ENCODE measurements at regions of chr2 and their contacts with region 1.

Region 1: DNA sequence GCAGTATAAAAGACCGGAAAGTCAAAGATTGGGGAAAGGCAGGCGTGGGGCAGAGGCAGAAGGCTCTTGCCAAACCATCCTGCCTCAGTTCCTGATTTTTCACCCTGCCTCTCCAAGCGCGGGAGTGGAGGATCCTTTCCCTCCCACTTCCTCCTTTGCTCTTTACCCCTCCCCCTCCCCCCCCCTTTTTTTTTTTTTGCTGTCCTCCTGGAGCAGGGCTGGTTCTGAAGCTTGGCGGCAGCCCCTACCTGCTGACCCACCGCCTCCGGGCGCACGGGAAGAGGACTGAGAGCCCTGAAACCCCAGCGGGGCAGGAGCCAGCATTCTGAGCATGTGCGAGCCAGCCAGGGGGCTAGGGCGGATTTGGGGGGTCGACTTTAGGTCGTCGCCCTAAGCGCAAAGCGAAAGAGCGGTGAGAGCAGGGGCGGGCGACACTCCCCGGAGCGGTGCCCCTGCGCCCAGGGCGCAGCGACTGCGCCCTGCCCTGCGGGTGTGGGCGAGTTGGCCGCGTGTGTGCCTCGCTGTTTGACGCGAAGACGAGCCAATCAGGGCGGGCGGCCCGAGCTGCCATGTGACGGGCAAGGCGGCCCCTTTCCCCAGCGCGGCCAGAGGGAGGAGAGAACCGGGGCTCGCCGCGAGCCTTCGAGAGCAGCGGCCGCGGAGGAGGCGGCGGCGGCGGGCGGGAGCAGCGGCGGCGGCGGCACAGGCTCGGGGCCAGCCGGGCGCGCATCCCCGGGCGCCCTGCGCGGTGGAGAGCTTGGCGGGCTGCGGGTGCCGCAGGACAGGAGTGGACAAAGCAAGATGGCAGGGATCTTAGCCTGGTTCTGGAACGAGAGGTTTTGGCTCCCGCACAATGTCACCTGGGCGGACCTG is at the start of gene CERS6:
- DNase-seq: peak; percentile 96
- H3K4me3 ChIP-seq: peak within 1 kb of the TSS; percentile 90
- H3K4me3 Mint-ChIP-seq: no peak within 1 kb of the TSS
- H3K27ac Mint-ChIP-seq: no peak within 1 kb of the TSS
- H3K4me1 ChIP-seq: no peaks in the 10 kb centered on the region
- H3K4me1 Mint-ChIP-seq: peaks cover 11% of the 10 kb centered on the region
- H3K27me3 ChIP-seq: no peaks in the 10 kb centered on the region
- H3K27me3 Mint-ChIP-seq: no peaks in the 10 kb centered on the region
- CTCF ChIP-seq: no peak
- total RNA-seq, gene CERS6: 32.7 and 35.5 TPM in 2 replicates

Region 2: GRCh38 chr2:167196461-167197252 is 1259.2 kb before region 1 on chr2:
- CTCF ChIA-PET with region 1: no interaction called
- POLR2A ChIA-PET with region 1: no interaction called
- intact Hi-C with region 1: no loop called
- DNase-seq: no peak
- H3K4me3 ChIP-seq: no peak overlapping the region
- H3K4me3 Mint-ChIP-seq: no peak overlapping the region
- H3K27ac Mint-ChIP-seq: no peak overlapping the region
- H3K4me1 ChIP-seq: peaks cover 10% of the 10 kb centered on the region; the same call in 1 of the 2 replicates
- H3K4me1 Mint-ChIP-seq: peaks cover 6% of the 10 kb centered on the region
- H3K27me3 ChIP-seq: no peaks in the 10 kb centered on the region
- H3K27me3 Mint-ChIP-seq: no peaks in the 10 kb centered on the region
- CTCF ChIP-seq: no peak

Region 3: GRCh38 chr2:168404764-168405163 is 51.1 kb before region 1 on chr2:
- CTCF ChIA-PET with region 1: no interaction called
- POLR2A ChIA-PET with region 1: no interaction called
- intact Hi-C with region 1: loop called (anchors 2 kb)
- DNase-seq: no peak
- H3K4me3 ChIP-seq: no peak overlapping the region
- H3K4me3 Mint-ChIP-seq: peak overlapping the region; percentile 29
- H3K27ac Mint-ChIP-seq: no peak overlapping the region
- H3K4me1 ChIP-seq: peaks cover 12% of the 10 kb centered on the region
- H3K4me1 Mint-ChIP-seq: peaks cover 28% of the 10 kb centered on the region
- H3K27me3 ChIP-seq: no peaks in the 10 kb centered on the region
- H3K27me3 Mint-ChIP-seq: no peaks in the 10 kb centered on the region
- CTCF ChIP-seq: no peak

Region 4: GRCh38 chr2:168478206-168478605 is 22.3 kb after region 1 on chr2:
- CTCF ChIA-PET with region 1: no interaction called
- POLR2A ChIA-PET with region 1: no interaction called
- intact Hi-C with region 1: loop called (anchors 2 kb)
- DNase-seq: peak; percentile 48 to 65
- H3K4me3 ChIP-seq: no peak overlapping the region
- H3K4me3 Mint-ChIP-seq: no peak overlapping the region
- H3K27ac Mint-ChIP-seq: peak overlapping the region; percentile 76
- H3K4me1 ChIP-seq: peaks cover 36% of the 10 kb centered on the region
- H3K4me1 Mint-ChIP-seq: peaks cover 38% of the 10 kb centered on the region
- H3K27me3 ChIP-seq: no peaks in the 10 kb centered on the region
- H3K27me3 Mint-ChIP-seq: no peaks in the 10 kb centered on the region
- CTCF ChIP-seq: no peak

Region 5: GRCh38 chr2:168552450-168552856 is 96.6 kb after region 1 on chr2:
- CTCF ChIA-PET with region 1: no interaction called
- POLR2A ChIA-PET with region 1: no interaction called
- intact Hi-C with region 1: loop called (anchors 5 kb)
- DNase-seq: no peak
- H3K4me3 ChIP-seq: no peak overlapping the region
- H3K4me3 Mint-ChIP-seq: no peak overlapping the region
- H3K27ac Mint-ChIP-seq: no peak overlapping the region
- H3K4me1 ChIP-seq: peaks cover 12% of the 10 kb centered on the region
- H3K4me1 Mint-ChIP-seq: peaks cover 7% of the 10 kb centered on the region
- H3K27me3 ChIP-seq: no peaks in the 10 kb centered on the region
- H3K27me3 Mint-ChIP-seq: no peaks in the 10 kb centered on the region
- CTCF ChIP-seq: no peak

Region 6: DNA sequence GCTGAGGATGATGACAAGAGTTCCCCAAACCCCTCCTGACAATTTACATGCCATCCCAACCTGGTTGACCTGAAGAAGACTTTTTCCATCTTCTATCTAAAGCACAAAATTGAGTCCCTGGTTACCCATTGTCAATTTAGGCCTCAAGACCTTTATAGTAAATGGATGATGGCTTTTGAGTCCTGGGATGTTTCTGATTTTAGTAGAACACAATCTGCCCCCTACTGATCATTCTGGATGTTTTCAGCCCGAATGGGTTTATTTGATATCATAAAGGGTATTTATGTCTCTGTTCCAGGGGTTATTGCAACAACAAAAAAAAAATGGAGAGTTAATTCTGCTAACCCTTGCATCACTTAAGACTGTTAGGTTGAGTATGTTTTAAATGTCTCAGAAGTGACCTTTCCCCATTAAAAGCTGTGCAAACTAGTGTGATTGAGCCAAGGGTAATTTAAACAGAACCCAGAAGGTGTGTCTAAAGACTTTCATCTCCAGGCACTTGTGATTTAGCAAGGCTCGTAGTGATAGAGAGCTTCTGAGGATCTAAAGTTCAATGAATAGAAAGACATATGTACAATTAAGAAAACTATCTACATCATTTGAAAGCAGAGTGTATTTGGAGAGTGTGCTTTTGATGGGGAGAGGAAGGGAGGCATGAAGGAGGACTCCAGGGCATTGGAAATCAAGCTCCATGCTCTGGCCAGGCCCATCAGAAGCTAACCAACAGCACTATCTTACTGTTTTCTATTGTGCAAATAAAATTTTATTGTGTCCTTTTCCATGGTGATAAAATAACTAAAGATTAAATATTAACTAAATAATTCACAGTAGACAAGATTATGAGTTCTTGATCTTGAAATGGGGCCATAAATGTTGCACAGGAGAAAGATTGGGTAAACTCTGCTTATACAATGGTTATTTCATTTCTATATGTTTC is 249.9 kb after region 1 on chr2:
- CTCF ChIA-PET with region 1: no interaction called
- POLR2A ChIA-PET with region 1: no interaction called
- intact Hi-C with region 1: loop called (anchors 5 kb)
- DNase-seq: peak; percentile 64 to 79
- H3K4me3 ChIP-seq: no peak overlapping the region
- H3K4me3 Mint-ChIP-seq: peak overlapping the region; percentile 8
- H3K27ac Mint-ChIP-seq: peak overlapping the region; percentile 67
- H3K4me1 ChIP-seq: peaks cover 38% of the 10 kb centered on the region
- H3K4me1 Mint-ChIP-seq: peaks cover 18% of the 10 kb centered on the region
- H3K27me3 ChIP-seq: no peaks in the 10 kb centered on the region
- H3K27me3 Mint-ChIP-seq: no peaks in the 10 kb centered on the region
- CTCF ChIP-seq: peak; percentile 39 to 47